PC-3 (cell line): ENCODE measurements at regions of chr6 and their contacts with region 1.

Region 1: GRCh38 chr6:50791900-50792508 is 26.7 kb upstream of the TFAP2B start:
- DNase-seq: peak; percentile 74
- ATAC-seq: peak; percentile 59
- H3K4me3 ChIP-seq: no peak overlapping the region
- H3K27ac ChIP-seq: no peak overlapping the region
- H3K4me1 ChIP-seq: 0 out of 2 replicates have a peak, but pooled peaks cover 3% of the 10 kb centered on the region
- H3K27me3 ChIP-seq: peaks cover 58% of the 10 kb centered on the region
- CTCF ChIP-seq: peak; percentile 86

Region 2: DNA sequence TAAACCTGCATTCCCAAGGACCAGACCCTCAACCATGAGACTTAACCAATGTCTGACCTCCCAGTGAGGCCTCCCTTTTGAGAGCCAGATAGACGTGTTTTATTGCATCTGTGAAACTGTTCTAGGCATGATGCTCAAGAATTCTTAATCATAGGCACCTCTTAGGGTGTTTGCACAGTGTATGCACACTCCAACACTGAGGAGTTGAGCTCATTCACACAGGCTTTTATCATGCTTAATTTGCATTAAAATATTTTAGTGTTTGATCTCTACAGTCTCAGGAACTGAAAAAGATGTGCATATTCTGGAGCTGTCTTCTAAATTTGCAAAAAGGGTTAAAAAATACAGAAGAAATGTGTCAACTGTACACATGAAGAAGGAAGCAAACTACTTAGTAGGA is 1182.7 kb before region 1 on chr6:
- CTCF ChIA-PET with region 1: no interaction called
- POLR2A ChIA-PET with region 1: no interaction called
- intact Hi-C with region 1: no loop called
- DNase-seq: no peak
- ATAC-seq: no peak
- H3K4me3 ChIP-seq: no peak overlapping the region
- H3K27ac ChIP-seq: no peak overlapping the region
- H3K4me1 ChIP-seq: 0 out of 2 replicates have a peak, but pooled peaks cover 9% of the 10 kb centered on the region
- H3K27me3 ChIP-seq: no peaks in the 10 kb centered on the region
- CTCF ChIP-seq: no peak

Region 3: DNA sequence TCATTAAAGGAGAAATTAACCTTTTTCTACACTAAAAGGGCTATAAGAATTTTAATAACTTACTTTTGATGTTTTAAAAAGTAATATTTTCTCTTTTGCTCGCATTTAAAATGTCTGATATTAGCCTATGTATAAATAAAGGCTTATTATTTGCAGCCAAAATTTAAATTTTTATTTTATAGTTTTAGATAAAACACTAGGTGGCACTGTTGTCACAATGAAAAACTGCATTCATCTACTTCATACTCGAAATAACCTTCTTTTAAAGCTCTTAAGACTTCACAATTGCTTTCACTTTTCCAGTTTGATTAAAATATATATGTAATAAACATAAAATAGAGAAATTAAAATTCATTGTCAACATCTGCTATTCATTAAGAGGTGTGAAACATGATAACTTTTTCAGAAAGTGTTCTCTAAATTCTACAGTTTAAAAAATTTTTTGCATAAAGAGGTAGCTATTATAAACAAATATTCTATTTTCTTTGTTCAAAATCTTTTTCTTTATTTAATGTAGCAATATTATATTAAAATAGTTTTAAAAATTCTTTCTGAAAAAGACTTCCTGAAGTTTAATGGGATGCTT is 663.5 kb before region 1 on chr6:
- CTCF ChIA-PET with region 1: no interaction called
- POLR2A ChIA-PET with region 1: no interaction called
- intact Hi-C with region 1: loop called (anchors 2 kb)
- DNase-seq: peak; percentile 49
- ATAC-seq: no peak
- H3K4me3 ChIP-seq: no peak overlapping the region
- H3K27ac ChIP-seq: no peak overlapping the region
- H3K4me1 ChIP-seq: no peaks in the 10 kb centered on the region
- H3K27me3 ChIP-seq: peaks cover 61% of the 10 kb centered on the region
- CTCF ChIP-seq: peak; percentile 56

Region 4: DNA sequence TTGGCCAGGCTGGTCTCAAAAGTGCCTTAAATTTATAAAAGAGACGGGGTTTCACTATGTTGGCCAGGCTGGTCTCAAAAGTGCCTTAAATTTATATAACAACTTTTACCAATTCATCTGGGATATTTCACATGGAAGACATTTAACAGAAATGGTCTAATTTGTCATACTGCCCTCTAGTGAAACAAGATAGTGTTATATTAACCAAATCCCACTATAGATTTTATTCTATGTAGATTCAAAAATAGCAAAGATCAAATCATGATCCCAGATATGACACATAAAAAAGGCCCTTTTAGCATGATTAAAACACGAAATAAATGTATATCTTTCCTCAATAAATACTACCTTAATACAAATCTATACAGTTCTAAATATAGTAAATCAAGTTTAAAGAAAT is 181.4 kb before region 1 on chr6:
- CTCF ChIA-PET with region 1: no interaction called
- POLR2A ChIA-PET with region 1: no interaction called
- intact Hi-C with region 1: loop called (anchors 5 kb)
- DNase-seq: peak; percentile 48
- ATAC-seq: no peak
- H3K4me3 ChIP-seq: no peak overlapping the region
- H3K27ac ChIP-seq: no peak overlapping the region
- H3K4me1 ChIP-seq: no peaks in the 10 kb centered on the region
- H3K27me3 ChIP-seq: peaks cover 13% of the 10 kb centered on the region; the same call in 1 of the 2 replicates
- CTCF ChIP-seq: peak; percentile 58

Region 5: GRCh38 chr6:50637267-50637666 is 154.7 kb before region 1 on chr6:
- CTCF ChIA-PET with region 1: no interaction called
- POLR2A ChIA-PET with region 1: no interaction called
- intact Hi-C with region 1: no loop called
- DNase-seq: no peak
- ATAC-seq: no peak
- H3K4me3 ChIP-seq: no peak overlapping the region
- H3K27ac ChIP-seq: no peak overlapping the region
- H3K4me1 ChIP-seq: no peaks in the 10 kb centered on the region
- H3K27me3 ChIP-seq: peaks cover 11% of the 10 kb centered on the region; the same call in 1 of the 2 replicates
- CTCF ChIP-seq: no peak

Region 6: DNA sequence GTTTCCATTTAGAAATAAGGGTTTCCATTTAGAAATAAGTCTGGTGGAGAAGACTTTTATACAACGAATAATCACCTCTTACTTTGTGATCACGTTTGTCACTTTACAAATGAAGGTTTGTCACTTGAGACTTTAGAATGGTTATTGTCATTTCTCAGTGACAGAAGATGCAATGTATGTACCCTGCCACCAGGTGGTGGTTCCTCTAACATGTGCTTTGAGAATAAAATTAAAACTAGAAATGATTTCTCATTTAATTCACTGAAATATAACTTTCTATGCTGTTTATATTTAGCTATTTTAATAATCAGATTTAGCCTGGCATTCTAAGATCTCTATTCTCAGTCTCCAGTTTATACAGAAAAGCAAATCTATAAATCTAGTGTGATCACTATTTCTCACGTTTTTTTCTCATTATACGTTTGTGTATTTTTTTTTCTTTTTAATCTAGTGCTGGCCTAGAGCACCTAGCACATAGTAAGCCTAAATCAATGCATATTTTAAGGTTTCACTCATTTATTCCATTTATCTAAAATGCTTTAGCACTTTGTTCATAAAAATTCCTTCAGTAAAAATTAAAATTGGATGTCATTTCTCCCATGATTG is 136.1 kb before region 1 on chr6:
- CTCF ChIA-PET with region 1: no interaction called
- POLR2A ChIA-PET with region 1: no interaction called
- intact Hi-C with region 1: loop called (anchors 1 kb)
- DNase-seq: peak; percentile 39
- ATAC-seq: no peak
- H3K4me3 ChIP-seq: no peak overlapping the region
- H3K27ac ChIP-seq: no peak overlapping the region
- H3K4me1 ChIP-seq: peaks cover 28% of the 10 kb centered on the region
- H3K27me3 ChIP-seq: no peaks in the 10 kb centered on the region
- CTCF ChIP-seq: peak; percentile 74

Region 7: DNA sequence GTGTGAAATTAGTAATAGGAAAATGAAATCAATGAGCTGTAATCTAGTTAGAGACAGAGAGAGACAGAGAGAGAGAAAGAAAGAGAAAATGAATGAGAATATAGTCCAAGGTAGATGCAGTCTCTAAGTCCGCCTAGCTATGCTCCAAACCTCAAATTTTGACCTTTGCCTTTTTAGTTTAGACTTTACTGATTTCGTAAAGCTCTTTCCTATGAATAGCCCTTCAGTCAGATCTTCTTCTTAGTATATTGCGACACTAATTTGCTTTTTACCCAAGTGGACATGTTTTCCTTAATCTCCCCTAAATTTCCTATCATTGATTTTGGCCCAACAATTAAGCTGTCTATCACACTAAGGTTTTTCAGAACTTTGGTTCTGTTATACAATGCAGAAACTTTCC is 29.2 kb before region 1 on chr6:
- CTCF ChIA-PET with region 1: no interaction called
- POLR2A ChIA-PET with region 1: no interaction called
- intact Hi-C with region 1: no loop called
- DNase-seq: no peak
- ATAC-seq: no peak
- H3K4me3 ChIP-seq: no peak overlapping the region
- H3K27ac ChIP-seq: no peak overlapping the region
- H3K4me1 ChIP-seq: no peaks in the 10 kb centered on the region
- H3K27me3 ChIP-seq: no peaks in the 10 kb centered on the region
- CTCF ChIP-seq: no peak